Activated T-helper 1 cell treated with anti-CD3 and anti-CD28 coated beads, Interleukin-12 subunit alpha, Interleukin-12 subunit beta, Interleukin-2, Interleukin-4 antibody, amounts not matched to agents 30 ng/mL and 10 ng/mL and 1 ng/mL, durations not matched to agents 14 hours and 24 hours and 36 hours (primary cell): ENCODE measurements at regions of chr19 and their contacts with region 1.

Region 1: GRCh38 chr19:43619262-43620060 is at the start of gene ZNF428:
- DNase-seq: peak; percentile 86
- H3K4me3 Mint-ChIP-seq: peak within 1 kb of the TSS; percentile 98
- H3K27ac Mint-ChIP-seq: peak within 1 kb of the TSS; percentile 99
- H3K4me1 Mint-ChIP-seq: peaks cover 23% of the 10 kb centered on the region
- H3K27me3 Mint-ChIP-seq: no peaks in the 10 kb centered on the region
- total RNA-seq, gene ZNF428: 17.9 and 20.3 TPM in 2 replicates

Region 2: DNA sequence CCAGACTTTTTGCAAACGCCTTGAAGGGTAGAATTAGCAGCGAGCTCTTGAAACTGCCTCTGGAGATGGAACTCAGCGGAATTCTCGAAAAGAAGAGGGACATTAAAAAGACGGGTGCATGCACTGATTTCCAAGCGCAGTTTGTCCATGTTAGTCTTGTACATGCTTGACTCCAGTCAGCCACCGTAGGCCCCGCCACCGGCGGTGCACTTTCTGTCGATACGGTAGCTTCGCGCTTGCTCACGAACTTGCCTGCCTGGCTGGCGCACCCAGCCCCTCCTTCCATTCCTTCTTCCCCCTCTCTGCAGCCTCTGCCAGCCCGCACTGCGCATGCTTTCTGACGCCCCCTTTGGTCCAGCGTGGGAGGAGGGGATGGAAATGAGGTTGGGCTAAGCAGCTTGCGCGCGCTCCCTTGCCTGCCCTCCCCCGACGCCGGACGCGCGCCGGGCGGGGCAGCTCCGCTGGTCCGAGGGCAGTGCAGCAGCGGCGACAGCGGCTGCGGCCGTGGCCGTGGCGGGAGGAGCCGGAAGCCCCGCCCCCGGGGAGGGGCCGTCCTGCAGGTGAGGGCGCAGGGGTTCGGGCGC is 86.4 kb before region 1 on chr19 and contains the start of gene ZNF575:
- intact Hi-C with region 1: loop called (anchors 1 kb)
- DNase-seq: peak; percentile 81
- H3K4me3 Mint-ChIP-seq: peak within 1 kb of the TSS; percentile 96
- H3K27ac Mint-ChIP-seq: peak within 1 kb of the TSS; percentile 99
- H3K4me1 Mint-ChIP-seq: peaks cover 23% of the 10 kb centered on the region
- H3K27me3 Mint-ChIP-seq: no peaks in the 10 kb centered on the region
- total RNA-seq, gene ZNF575: 1.4 and 2.6 TPM in 2 replicates

Region 3: DNA sequence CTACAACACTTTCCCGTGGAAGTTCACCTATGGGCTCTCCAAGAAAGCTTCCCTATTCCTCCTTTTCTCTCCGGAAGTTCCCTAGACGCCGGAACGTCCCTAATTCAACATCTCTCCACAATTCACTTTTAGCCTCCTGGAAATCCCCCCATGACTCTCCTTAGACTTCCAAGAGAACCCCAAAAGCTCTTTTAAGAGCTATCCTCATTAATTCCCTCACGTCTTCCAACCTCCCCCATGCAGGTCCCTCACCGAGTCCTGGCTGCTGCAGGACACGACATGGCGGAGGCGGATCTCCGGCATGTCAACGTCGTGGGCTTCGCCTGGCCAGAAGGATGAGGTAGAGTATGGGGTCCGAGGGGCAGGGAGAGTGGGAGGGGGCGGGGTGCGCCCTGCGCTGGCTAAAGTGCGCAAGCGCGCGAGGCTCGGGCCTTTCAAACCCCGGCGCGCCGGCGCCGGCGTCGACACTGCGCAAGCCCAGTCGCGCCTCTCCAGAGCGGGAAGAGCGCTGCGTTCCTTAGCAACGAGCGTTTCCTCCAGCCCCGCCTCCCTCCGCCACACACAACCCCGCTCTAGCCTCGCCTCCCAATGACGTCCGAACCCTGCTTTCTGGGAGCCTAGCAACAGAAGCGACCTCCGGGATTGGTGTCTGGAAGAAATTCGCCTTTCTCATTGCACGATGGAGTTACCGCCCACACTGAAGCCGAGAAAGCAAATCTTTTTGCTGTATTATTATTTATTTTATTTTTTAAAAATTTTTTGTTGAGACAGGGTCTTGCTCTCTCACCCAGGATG is 44.1 kb before region 1 on chr19 and contains the starts of genes PINLYP and XRCC1:
- intact Hi-C with region 1: loop called (anchors 1 kb)
- DNase-seq: peak; percentile 95
- H3K4me3 Mint-ChIP-seq: peak within 1 kb of the TSS; percentile 96
- H3K27ac Mint-ChIP-seq: peak within 1 kb of the TSS; percentile 91
- H3K4me1 Mint-ChIP-seq: peaks cover 25% of the 10 kb centered on the region
- H3K27me3 Mint-ChIP-seq: peaks cover 3% of the 10 kb centered on the region
- total RNA-seq, gene PINLYP: 4.9 and 5.7 TPM in 2 replicates
- total RNA-seq, gene XRCC1: 27.4 and 28.7 TPM in 2 replicates

Region 4: DNA sequence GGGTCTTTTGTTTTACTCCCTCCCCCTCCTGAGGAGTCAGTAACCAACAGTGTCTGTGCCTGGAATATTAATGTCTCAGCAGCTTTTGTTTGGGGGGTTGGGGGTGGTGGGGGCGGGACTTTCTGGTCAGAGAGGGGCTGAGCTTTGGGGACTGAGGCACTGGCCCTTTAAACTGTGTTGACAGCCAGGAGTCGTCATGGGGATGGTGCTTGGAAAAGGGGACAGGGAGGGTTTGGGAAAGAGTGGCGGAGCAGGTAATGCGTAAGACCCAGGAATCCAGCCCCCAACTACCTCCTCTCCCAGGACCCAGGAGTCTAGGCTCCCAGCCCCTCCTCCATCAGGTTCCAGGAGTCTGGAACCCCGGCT is 15.0 kb after region 1 on chr19:
- intact Hi-C with region 1: no loop called
- DNase-seq: no peak
- H3K4me3 Mint-ChIP-seq: no peak overlapping the region
- H3K27ac Mint-ChIP-seq: no peak overlapping the region
- H3K4me1 Mint-ChIP-seq: no peaks in the 10 kb centered on the region
- H3K27me3 Mint-ChIP-seq: peaks cover 43% of the 10 kb centered on the region

Region 5: GRCh38 chr19:43754503-43755255 is 135.2 kb after region 1 on chr19 and contains the start of gene SMG9:
- intact Hi-C with region 1: loop called (anchors 1 kb)
- DNase-seq: peak; percentile 99
- H3K4me3 Mint-ChIP-seq: peak within 1 kb of the TSS; percentile 98
- H3K27ac Mint-ChIP-seq: peak within 1 kb of the TSS; percentile 100
- H3K4me1 Mint-ChIP-seq: peaks cover 57% of the 10 kb centered on the region
- H3K27me3 Mint-ChIP-seq: peaks cover 2% of the 10 kb centered on the region
- total RNA-seq, gene SMG9: 86.6 and 89.2 TPM in 2 replicates